ENCODE measurements at regions of chr15 and their contacts with region 1.

Region 1: DNA sequence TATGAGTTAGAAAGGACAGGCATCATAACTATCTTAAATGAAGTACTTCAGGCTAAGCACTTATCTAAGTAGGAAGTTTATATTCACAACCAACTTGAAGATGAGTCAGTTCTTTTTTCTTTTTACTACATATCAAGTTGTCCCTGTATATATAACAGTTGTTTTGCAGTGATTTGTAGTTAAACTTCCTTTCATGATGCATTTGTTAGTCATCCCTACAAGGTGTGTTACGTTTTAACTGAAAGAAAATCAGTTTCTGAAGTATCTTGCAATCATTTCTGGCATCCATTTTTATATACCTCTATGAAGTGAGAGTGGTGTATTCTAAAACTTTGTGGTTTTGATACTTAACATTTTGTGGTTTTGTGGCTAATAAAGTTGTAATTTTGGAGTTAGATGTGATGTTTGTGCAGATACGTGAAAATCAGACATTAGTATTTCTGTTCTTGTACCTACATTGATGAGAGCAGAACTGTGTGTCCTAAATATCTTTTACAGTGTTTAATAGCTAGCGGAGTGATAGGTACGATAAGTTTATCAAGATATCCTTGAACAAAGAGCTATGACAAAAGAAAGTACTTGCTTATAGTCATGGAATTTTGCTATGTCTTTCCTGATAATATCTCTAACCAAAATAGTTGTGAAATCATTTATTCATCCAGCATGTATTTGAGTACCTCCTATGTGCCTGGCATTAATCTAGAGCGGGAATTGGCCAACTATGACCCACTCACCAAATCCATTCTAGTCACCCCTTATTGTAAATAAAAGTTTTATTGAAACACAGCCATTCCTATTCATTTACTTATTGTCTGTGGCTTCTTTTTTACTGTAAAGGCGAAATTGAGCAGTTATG is 46.3 kb downstream of the ZFAND6 start:
- DNase-seq: peak; percentile 61
- H3K4me3 Mint-ChIP-seq: peak overlapping the region; percentile 44
- H3K27ac Mint-ChIP-seq: peak overlapping the region; percentile 84
- H3K4me1 Mint-ChIP-seq: peaks cover 21% of the 10 kb centered on the region
- H3K27me3 Mint-ChIP-seq: no peaks in the 10 kb centered on the region
- CTCF ChIP-seq: no peak

Region 2: DNA sequence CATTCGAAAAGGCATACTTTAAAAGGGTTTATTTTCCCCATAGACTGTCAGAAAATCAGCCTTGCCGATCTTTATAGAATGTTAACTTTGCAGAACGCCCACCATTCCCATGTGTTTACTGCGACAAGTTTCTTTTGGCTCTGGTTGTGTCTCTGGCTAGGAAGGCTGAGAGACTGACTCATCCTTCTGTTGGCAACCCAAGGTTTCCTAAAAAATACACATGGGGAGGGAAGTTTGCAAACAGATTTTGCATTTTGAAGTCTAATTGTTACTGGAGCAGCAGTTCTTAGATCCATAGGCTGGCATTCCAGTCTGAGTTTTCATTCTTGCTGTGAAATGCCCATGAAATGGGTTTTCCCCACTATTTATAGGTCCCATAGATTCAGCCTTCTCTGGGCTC is 711.6 kb before region 1 on chr15:
- CTCF ChIA-PET with region 1: no interaction called
- POLR2A ChIA-PET with region 1: no interaction called
- intact Hi-C with region 1: no loop called
- DNase-seq: peak; percentile 38
- H3K4me3 Mint-ChIP-seq: no peak overlapping the region
- H3K27ac Mint-ChIP-seq: no peak overlapping the region
- H3K4me1 Mint-ChIP-seq: no peaks in the 10 kb centered on the region
- H3K27me3 Mint-ChIP-seq: no peaks in the 10 kb centered on the region
- CTCF ChIP-seq: no peak

Region 3: GRCh38 chr15:80031841-80032240 is 74.0 kb before region 1 on chr15:
- CTCF ChIA-PET with region 1: no interaction called
- POLR2A ChIA-PET with region 1: no interaction called
- intact Hi-C with region 1: no loop called
- DNase-seq: peak; percentile 26
- H3K4me3 Mint-ChIP-seq: no peak overlapping the region
- H3K27ac Mint-ChIP-seq: no peak overlapping the region
- H3K4me1 Mint-ChIP-seq: peaks cover 22% of the 10 kb centered on the region
- H3K27me3 Mint-ChIP-seq: no peaks in the 10 kb centered on the region
- CTCF ChIP-seq: no peak

Region 4: DNA sequence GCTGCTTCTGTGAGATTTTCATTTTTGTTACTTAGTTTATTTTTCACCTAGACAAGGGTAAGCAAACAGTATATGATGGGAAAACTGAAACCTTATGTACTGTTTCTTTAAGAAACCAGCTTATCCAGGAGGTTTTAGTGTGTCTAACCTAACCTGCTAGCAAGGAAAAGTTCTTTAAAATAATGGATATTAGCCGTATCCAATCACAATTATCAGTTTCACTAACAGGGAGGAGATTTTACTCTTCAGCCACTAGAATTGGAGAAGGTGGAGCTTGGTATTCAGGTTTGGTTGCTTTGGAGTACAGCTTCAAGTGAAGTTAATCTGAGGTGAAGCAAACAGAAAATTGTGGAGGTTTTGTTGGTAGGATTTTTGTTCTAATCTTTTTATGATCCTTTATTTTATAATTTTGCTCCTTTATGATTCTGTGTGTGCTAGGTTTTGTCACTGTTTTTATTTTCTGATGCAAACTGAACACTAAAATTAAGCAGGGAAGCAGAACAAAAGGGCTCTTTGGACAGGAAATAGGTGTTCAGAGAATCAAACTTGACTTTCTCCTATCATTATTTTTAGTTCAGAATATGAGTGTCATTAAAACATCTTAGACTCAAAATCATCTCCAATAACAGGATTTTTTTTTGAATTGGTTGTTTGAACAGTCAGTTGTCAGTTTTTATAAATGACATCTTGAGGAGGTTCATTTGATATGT is 33.4 kb before region 1 on chr15:
- CTCF ChIA-PET with region 1: no interaction called
- POLR2A ChIA-PET with region 1: interaction called, 3 read pairs
- intact Hi-C with region 1: loop called (anchors 5 kb)
- DNase-seq: peak; percentile 89
- H3K4me3 Mint-ChIP-seq: peak overlapping the region; percentile 82
- H3K27ac Mint-ChIP-seq: peak overlapping the region; percentile 76
- H3K4me1 Mint-ChIP-seq: peaks cover 21% of the 10 kb centered on the region
- H3K27me3 Mint-ChIP-seq: no peaks in the 10 kb centered on the region
- CTCF ChIP-seq: no peak

Measured in MCF 10A (cell line).